ENCODE measurements at regions of chr3 and their contacts with region 1.

Region 1: GRCh38 chr3:191051037-191051436 is 148.0 kb upstream of the OSTN start:
- DNase-seq: no peak
- ATAC-seq: peak in 1 of 4 donors; percentile 58
- H3K4me3 ChIP-seq: no peak overlapping the region
- H3K27ac ChIP-seq: no peak overlapping the region
- H3K4me1 ChIP-seq: no peaks in the 10 kb centered on the region
- H3K27me3 ChIP-seq: no peaks in the 10 kb centered on the region
- CTCF ChIP-seq: peak; percentile 56

Region 2: DNA sequence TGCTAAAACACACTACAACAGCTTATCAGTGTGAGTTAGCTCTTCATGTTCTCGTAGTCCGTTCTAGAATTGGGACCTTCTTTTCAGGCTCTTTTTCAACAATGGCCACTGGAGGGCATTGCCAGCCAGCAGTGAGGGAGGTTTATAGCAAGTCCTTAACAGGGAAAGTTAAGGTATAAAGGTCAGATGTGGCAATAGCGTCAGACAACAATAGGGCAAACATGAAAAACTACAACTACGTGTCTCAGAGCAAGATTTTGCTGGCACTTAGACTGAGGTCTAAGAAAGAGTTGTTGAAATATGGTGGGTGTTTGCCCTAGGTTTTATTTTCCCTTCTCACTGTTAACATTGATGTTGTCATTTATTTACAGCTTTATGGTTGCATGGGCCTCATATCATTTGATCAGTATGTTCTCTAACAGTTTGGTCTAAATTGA is 349.9 kb before region 1 on chr3:
- intact Hi-C with region 1: loop called (anchors 5 to 10 kb)
- DNase-seq: no peak
- ATAC-seq: peak; percentile 40 to 73 (median 54)
- H3K4me3 ChIP-seq: no peak overlapping the region
- H3K27ac ChIP-seq: no peak overlapping the region
- H3K4me1 ChIP-seq: peaks cover 10% of the 10 kb centered on the region
- H3K27me3 ChIP-seq: no peaks in the 10 kb centered on the region
- CTCF ChIP-seq: peak; percentile 24

Region 3: DNA sequence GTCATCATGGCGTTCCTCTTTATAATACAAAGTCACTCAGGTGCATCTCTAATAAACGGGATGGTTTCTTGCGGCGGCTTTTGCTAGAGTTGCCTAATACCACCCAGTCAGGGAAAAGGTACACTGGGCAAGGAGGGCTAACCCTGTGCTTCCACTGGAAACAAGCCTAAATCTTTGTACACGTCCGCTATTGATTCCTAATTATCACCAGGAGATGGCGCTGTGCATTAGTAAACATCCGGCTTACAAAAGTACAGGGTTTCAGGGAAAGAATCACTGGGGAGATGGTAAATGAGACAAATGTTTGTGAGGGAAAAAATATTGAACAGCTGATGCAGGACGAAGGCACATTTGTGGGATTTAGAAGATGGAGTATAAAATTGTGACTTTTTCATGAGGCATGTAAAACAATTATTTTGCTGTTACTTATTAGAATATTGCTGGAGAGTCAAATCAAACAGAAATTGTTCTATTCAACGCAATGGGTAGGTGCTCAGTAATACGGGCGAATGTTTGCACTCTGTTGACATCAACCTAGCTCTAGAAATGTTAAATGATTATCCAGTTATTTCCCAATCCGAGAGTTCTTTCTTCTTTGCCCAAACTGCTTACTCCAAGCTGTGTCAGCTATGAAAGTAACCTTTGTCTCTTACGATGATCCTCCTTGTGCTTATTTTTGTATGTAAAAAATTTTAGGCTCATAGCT is 239.1 kb before region 1 on chr3:
- intact Hi-C with region 1: loop called (anchors 1 to 5 kb)
- DNase-seq: no peak
- ATAC-seq: peak in 2 of 4 donors; percentile 58 to 68
- H3K4me3 ChIP-seq: peak overlapping the region; percentile 7
- H3K27ac ChIP-seq: no peak overlapping the region
- H3K4me1 ChIP-seq: no peaks in the 10 kb centered on the region
- H3K27me3 ChIP-seq: no peaks in the 10 kb centered on the region
- CTCF ChIP-seq: peak; percentile 55

Region 4: GRCh38 chr3:190883973-190884832 is 166.8 kb before region 1 on chr3:
- intact Hi-C with region 1: loop called (anchors 5 to 10 kb)
- DNase-seq: no peak
- ATAC-seq: no peak
- H3K4me3 ChIP-seq: no peak overlapping the region
- H3K27ac ChIP-seq: no peak overlapping the region
- H3K4me1 ChIP-seq: no peaks in the 10 kb centered on the region
- H3K27me3 ChIP-seq: no peaks in the 10 kb centered on the region
- CTCF ChIP-seq: peak; percentile 81

Measured in psoas muscle (tissue), 8 donors.